Panc1 (cell line): ENCODE measurements at regions of chr4 and their contacts with region 1.

Region 1: GRCh38 chr4:7557447-7557846 is 122.7 kb upstream of the PSAPL1 start:
- DNase-seq: peak; percentile 2
- ATAC-seq: peak; percentile 86
- H3K4me3 ChIP-seq: no peak overlapping the region
- H3K27ac ChIP-seq: no peak overlapping the region
- H3K4me1 ChIP-seq: peaks cover 4% of the 10 kb centered on the region; the same call in 1 of the 2 replicates
- H3K27me3 ChIP-seq: no peaks in the 10 kb centered on the region
- CTCF ChIP-seq: no peak

Region 2: GRCh38 chr4:7399440-7400234 is 157.8 kb before region 1 on chr4:
- CTCF ChIA-PET with region 1: no interaction called
- POLR2A ChIA-PET with region 1: interaction called, 17 read pairs
- in situ Hi-C with region 1: no loop called
- intact Hi-C with region 1: no loop called
- DNase-seq: no peak
- ATAC-seq: no peak
- H3K4me3 ChIP-seq: no peak overlapping the region
- H3K27ac ChIP-seq: no peak overlapping the region
- H3K4me1 ChIP-seq: no peaks in the 10 kb centered on the region
- H3K27me3 ChIP-seq: peaks cover 2% of the 10 kb centered on the region; the same call in 1 of the 2 replicates
- CTCF ChIP-seq: no peak

Region 3: DNA sequence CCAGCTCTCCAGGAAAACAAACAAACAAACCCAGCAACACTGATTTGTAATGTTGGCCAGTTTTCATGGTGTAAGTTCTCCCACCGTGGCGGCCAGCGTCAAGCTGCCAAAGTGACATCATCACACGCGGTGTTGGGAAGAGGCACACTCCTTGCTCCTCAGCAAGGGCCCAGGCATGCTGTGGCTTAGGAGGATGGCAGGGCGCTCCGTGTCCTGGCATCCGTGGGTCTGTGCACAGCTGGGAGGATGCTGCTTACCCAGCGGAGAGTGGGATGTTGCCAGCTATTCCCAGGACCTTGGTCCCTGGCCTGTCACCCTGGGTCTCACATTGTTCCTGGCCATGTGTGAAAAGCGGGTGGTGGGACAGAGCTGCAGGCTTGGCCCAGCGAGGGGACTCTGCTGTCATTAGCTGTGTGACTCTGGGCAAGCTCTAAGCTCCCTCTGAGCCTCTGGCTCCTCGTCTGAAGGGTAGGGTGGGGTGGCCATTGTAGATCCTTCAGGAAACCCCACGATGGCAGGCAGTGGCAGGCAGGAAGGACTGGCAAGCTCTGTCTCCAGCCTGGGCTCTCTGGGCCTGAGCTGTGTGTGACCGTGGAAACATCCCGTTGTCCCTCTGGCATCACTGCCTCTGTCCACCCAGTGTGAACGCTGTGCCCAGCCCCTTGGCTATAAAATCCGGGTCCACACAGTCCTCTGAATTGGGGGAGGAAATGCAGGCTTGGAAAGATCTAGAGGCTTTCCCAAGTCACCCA is 133.5 kb before region 1 on chr4:
- CTCF ChIA-PET with region 1: no interaction called
- POLR2A ChIA-PET with region 1: no interaction called
- in situ Hi-C with region 1: no loop called
- intact Hi-C with region 1: no loop called
- DNase-seq: no peak
- ATAC-seq: no peak
- H3K4me3 ChIP-seq: no peak overlapping the region
- H3K27ac ChIP-seq: no peak overlapping the region
- H3K4me1 ChIP-seq: no peaks in the 10 kb centered on the region
- H3K27me3 ChIP-seq: no peaks in the 10 kb centered on the region
- CTCF ChIP-seq: no peak